Panc1 (cell line): ENCODE measurements at regions of chr3 and their contacts with region 1.

Region 1: GRCh38 chr3:52144034-52144795 is 10.0 kb downstream of the POC1A start:
- DNase-seq: peak; percentile 30
- ATAC-seq: peak; percentile 89
- H3K4me3 ChIP-seq: no peak overlapping the region
- H3K27ac ChIP-seq: peak overlapping the region; percentile 39; the same call in 1 of the 2 replicates
- H3K4me1 ChIP-seq: no peaks in the 10 kb centered on the region
- H3K27me3 ChIP-seq: no peaks in the 10 kb centered on the region
- CTCF ChIP-seq: peak; percentile 88

Region 2: DNA sequence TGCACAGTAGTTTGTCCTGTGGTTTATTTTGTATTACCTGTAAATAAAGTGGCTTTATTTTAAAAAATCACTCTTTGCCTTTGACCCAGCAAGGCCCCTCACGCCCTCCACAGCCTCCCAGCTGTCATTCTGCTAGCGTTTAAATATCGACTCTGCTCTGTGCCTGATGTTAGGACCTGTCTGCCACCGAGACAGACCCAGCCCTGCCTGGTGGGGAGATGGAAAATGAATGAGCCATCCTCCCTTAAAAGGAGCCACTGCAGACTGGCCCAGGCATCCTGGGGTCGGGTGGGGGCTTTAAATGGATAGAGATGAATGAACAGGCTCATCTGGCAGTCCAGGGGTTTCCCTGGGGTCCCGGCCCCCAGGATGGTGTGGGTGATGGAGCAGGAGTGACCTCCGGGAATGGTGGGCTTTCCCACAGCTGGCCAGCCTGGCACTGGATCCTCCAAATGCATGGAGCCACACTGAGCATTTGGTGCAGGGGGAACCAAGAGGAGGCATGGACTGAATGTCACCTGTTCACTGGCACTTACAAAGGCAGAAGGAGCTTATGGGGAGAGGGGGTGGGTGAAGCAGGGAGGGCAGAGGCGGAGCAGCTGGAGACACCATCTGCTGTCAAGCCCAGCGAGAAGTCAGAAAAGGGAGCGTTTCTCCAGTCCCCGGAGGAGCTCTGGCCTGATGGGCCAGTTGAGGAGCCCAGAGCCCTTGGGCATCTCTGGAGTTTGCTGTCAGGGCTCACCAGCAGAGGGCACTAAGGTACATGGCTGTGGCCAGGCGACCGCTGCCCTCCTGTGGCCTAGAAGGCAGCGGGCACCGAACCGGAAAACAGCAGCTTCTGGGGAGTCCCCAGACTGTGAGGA is 425.4 kb before region 1 on chr3:
- CTCF ChIA-PET with region 1: no interaction called
- POLR2A ChIA-PET with region 1: no interaction called
- in situ Hi-C with region 1: no loop called
- intact Hi-C with region 1: no loop called
- DNase-seq: peak; percentile 27
- ATAC-seq: peak; percentile 93
- H3K4me3 ChIP-seq: no peak overlapping the region
- H3K27ac ChIP-seq: no peak overlapping the region
- H3K4me1 ChIP-seq: no peaks in the 10 kb centered on the region
- H3K27me3 ChIP-seq: no peaks in the 10 kb centered on the region
- CTCF ChIP-seq: peak; percentile 86

Region 3: GRCh38 chr3:51799879-51800749 is 344.1 kb before region 1 on chr3:
- CTCF ChIA-PET with region 1: no interaction called
- POLR2A ChIA-PET with region 1: no interaction called
- in situ Hi-C with region 1: no loop called
- intact Hi-C with region 1: no loop called
- DNase-seq: peak; percentile 22
- ATAC-seq: 0 out of 2 replicates have a peak, but pooled peaks have one; percentile 58
- H3K4me3 ChIP-seq: no peak overlapping the region
- H3K27ac ChIP-seq: no peak overlapping the region
- H3K4me1 ChIP-seq: no peaks in the 10 kb centered on the region
- H3K27me3 ChIP-seq: peaks cover 3% of the 10 kb centered on the region
- CTCF ChIP-seq: peak; percentile 79

Region 4: GRCh38 chr3:52001443-52001974 is 142.7 kb before region 1 on chr3:
- CTCF ChIA-PET with region 1: interaction called, 3 read pairs
- POLR2A ChIA-PET with region 1: no interaction called
- in situ Hi-C with region 1: no loop called
- intact Hi-C with region 1: loop called (anchors 2 kb)
- DNase-seq: no peak
- ATAC-seq: peak; percentile 89
- H3K4me3 ChIP-seq: no peak overlapping the region
- H3K27ac ChIP-seq: no peak overlapping the region
- H3K4me1 ChIP-seq: peaks cover 5% of the 10 kb centered on the region
- H3K27me3 ChIP-seq: no peaks in the 10 kb centered on the region
- CTCF ChIP-seq: peak; percentile 92

Region 5: DNA sequence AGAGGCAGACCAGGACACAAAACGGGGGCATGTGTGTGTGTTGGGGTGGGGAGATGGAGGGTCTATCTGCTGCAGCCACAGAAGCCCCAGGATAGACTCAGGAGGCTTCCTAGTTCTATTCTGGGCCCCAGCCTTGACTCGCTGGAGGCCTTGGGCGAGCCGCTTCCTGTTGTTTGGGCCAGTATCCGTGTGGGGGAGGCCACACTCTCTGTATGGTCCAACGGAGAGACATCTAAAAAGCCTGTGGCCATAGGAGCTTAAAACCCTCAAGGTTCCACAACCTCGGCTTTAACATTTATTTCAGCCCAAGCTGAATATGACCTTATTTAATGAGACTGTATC is 22.8 kb before region 1 on chr3:
- CTCF ChIA-PET with region 1: no interaction called
- POLR2A ChIA-PET with region 1: no interaction called
- in situ Hi-C with region 1: no loop called
- intact Hi-C with region 1: no loop called
- DNase-seq: no peak
- ATAC-seq: no peak
- H3K4me3 ChIP-seq: no peak overlapping the region
- H3K27ac ChIP-seq: no peak overlapping the region
- H3K4me1 ChIP-seq: no peaks in the 10 kb centered on the region
- H3K27me3 ChIP-seq: no peaks in the 10 kb centered on the region
- CTCF ChIP-seq: no peak

Region 6: GRCh38 chr3:52154117-52155094 is 10.2 kb after region 1 on chr3 and contains the start of gene POC1A:
- CTCF ChIA-PET with region 1: no interaction called
- POLR2A ChIA-PET with region 1: interaction called, 17 read pairs
- in situ Hi-C with region 1: no loop called
- intact Hi-C with region 1: no loop called
- DNase-seq: peak; percentile 88
- ATAC-seq: peak; percentile 97
- H3K4me3 ChIP-seq: peak within 1 kb of the TSS; percentile 78 to 79
- H3K27ac ChIP-seq: peak within 1 kb of the TSS; percentile 83
- H3K4me1 ChIP-seq: peaks cover 8% of the 10 kb centered on the region
- H3K27me3 ChIP-seq: no peaks in the 10 kb centered on the region
- CTCF ChIP-seq: no peak
- total RNA-seq, gene POC1A: 25.7 TPM